Naive thymus-derived CD4-positive, alpha-beta T cell (primary cell): ENCODE measurements at regions of chr12 and their contacts with region 1.

Region 1: GRCh38 chr12:64610149-64610678 is at the start of gene RASSF3:
- DNase-seq: peak; percentile 58 to 85 (median 75)
- ATAC-seq: peak; percentile 76
- H3K4me3 ChIP-seq: peak within 1 kb of the TSS; percentile 93
- H3K4me3 Mint-ChIP-seq: peak within 1 kb of the TSS; percentile 93 to 100 (median 97)
- H3K27ac ChIP-seq: peak within 1 kb of the TSS; percentile 89
- H3K27ac Mint-ChIP-seq: peak within 1 kb of the TSS; percentile 90 to 97 (median 95)
- H3K4me1 ChIP-seq: peaks cover 28 to 29% of the 10 kb centered on the region in 2 donors
- H3K4me1 Mint-ChIP-seq: peaks cover 30 to 50% (median 41%) of the 10 kb centered on the region in 7 donors
- H3K27me3 ChIP-seq: no peaks in the 10 kb centered on the region
- H3K27me3 Mint-ChIP-seq: no peaks in the 10 kb centered on the region
- total RNA-seq, gene RASSF3: 79.0 to 200 (median 107) TPM

Region 2: DNA sequence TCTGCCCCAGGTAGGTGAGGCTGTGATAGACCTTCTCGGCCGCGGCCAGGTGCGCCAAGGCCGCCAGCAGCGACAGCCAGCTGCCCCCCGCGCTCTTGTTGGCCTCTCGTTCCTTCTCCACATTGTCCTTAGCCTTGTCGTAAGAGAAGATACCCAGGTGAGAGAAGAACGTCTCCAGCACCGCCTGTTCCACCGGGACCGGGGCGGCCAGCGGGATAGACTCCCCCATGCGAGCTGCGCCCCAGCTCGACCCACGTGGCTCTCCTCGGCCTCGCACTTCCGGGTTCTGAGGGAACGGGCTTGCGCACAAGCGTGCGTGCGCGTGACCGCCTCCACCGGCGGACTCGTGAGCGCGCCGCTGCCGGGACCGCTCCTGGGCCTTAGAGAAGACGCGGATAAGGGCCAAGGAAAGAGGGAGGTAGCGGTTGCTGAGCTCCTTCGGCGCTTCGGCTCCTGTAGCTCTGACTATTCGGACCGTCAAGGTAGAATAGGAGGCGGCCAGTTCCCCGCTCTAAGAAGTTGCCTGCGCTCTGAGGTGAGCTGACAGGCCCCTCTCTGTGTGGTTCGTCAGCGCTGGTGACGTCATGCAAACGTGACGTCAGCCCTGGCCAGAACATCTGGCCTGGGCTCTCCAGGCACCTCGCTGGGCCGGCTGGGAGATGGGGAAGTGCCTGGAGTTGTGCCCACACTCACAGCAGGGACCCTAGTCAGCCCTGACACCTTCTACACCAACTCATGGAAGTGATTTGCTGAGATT is 388.0 kb before region 1 on chr12 and contains the start of gene KICS2:
- CTCF ChIA-PET with region 1: no interaction called
- POLR2A ChIA-PET with region 1: no interaction called
- intact Hi-C with region 1: loop called (anchors 1 to 5 kb)
- DNase-seq: peak; percentile 89 to 95 (median 93)
- ATAC-seq: peak; percentile 96
- H3K4me3 ChIP-seq: peak within 1 kb of the TSS; percentile 87
- H3K4me3 Mint-ChIP-seq: peak within 1 kb of the TSS; percentile 86 to 100 (median 98)
- H3K27ac ChIP-seq: peak within 1 kb of the TSS; percentile 92
- H3K27ac Mint-ChIP-seq: peak within 1 kb of the TSS; percentile 94 to 100 (median 98)
- H3K4me1 ChIP-seq: peaks cover 8 to 19% of the 10 kb centered on the region in 2 donors
- H3K4me1 Mint-ChIP-seq: peaks cover 17 to 51% (median 41%) of the 10 kb centered on the region in 7 donors
- H3K27me3 ChIP-seq: no peaks in the 10 kb centered on the region
- H3K27me3 Mint-ChIP-seq: peaks cover 0 to 21% (median 8%) of the 10 kb centered on the region in 5 donors
- total RNA-seq, gene KICS2: 11.7 to 26.9 (median 19.5) TPM

Region 3: DNA sequence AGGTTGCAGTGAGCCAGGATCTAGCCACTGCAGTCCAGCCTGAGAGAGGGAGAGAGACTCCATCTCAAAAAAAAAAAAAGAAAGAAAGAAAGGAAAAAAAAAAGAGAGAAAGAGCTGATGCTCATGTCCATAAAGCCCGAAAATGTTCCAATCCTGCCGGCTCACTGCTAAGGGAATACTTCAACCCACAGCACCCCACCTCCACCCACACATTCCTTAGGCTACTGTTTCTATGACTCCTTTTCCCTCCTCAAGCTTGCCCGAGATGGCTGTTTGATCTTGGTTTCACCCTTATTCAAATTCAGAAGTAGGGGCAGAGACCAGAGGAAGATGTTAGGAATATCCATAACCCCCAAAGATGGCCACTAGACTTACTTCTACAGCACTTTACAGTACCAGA is 59.5 kb before region 1 on chr12:
- CTCF ChIA-PET with region 1: interaction called, 9 read pairs
- POLR2A ChIA-PET with region 1: interaction called, 10 read pairs
- intact Hi-C with region 1: loop called (anchors 1 kb)
- DNase-seq: no peak
- ATAC-seq: no peak
- H3K4me3 ChIP-seq: no peak overlapping the region
- H3K4me3 Mint-ChIP-seq: no peak overlapping the region
- H3K27ac ChIP-seq: no peak overlapping the region
- H3K27ac Mint-ChIP-seq: peak overlapping the region in 3 of 9 donors; percentile 7 to 83 (median 18)
- H3K4me1 ChIP-seq: peaks cover 0 to 4% of the 10 kb centered on the region in 2 donors
- H3K4me1 Mint-ChIP-seq: peaks cover 2 to 11% (median 9%) of the 10 kb centered on the region in 7 donors
- H3K27me3 ChIP-seq: no peaks in the 10 kb centered on the region
- H3K27me3 Mint-ChIP-seq: peaks cover 0 to 20% (median 0%) of the 10 kb centered on the region in 5 donors

Region 4: GRCh38 chr12:64583771-64584421 is 26.3 kb before region 1 on chr12:
- CTCF ChIA-PET with region 1: interaction called, 4 read pairs
- POLR2A ChIA-PET with region 1: interaction called, 23 read pairs
- intact Hi-C with region 1: loop called in 1 of 2 experiments (anchors 1 kb)
- DNase-seq: peak in 4 of 9 donors; percentile 16 to 37 (median 26)
- ATAC-seq: peak; percentile 48
- H3K4me3 ChIP-seq: peak overlapping the region; percentile 25
- H3K4me3 Mint-ChIP-seq: peak overlapping the region; percentile 29 to 90 (median 78)
- H3K27ac ChIP-seq: peak overlapping the region; percentile 21
- H3K27ac Mint-ChIP-seq: peak overlapping the region; percentile 42 to 94 (median 82)
- H3K4me1 ChIP-seq: peaks cover 6 to 25% of the 10 kb centered on the region in 2 donors
- H3K4me1 Mint-ChIP-seq: peaks cover 18 to 43% (median 32%) of the 10 kb centered on the region in 7 donors
- H3K27me3 ChIP-seq: no peaks in the 10 kb centered on the region
- H3K27me3 Mint-ChIP-seq: peaks cover 0 to 4% (median 0%) of the 10 kb centered on the region in 5 donors

Region 5: DNA sequence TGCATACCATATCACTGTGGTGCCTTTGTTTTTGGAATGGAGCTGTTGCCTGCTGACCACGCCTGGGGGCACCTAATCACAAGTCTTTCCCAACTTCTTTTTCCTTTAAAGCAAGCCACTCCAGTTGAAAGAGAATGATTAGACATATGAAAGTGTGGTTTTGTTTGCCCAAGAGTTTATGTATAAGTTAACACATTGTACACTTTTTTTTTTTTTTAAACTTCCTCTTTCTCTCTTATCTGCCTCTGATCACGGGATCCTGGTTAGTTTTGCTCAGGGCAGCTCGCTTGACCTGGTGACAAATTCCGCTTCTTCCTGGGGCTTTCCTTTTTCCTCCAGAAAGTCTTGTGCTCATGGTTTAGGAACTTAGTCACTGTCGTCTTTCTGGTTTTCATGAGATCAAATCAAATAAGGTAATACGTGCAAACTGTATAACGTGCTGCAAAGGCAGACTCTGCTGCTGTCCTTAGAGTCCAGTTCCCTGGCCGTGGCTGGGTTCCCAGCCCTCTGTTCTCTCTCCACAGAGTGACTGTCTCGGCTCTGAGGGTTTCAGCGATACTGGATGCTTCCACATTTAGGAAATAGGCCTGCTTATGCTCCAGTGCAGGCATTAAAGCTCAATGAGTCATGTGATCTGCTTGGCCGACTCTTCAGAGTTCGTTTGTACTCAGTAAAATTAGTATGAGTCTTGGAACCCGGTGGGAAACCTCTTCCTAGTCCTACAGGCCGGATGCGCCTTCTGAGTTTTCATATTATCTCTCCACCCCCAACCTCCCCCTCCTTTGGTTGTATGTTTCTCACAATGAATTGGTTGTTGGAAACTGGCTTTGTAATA is 15.2 kb after region 1 on chr12:
- CTCF ChIA-PET with region 1: no interaction called
- POLR2A ChIA-PET with region 1: interaction called, 5 read pairs
- intact Hi-C with region 1: loop called in 1 of 2 experiments (anchors 1 kb)
- DNase-seq: peak in 1 of 9 donors; percentile 40
- ATAC-seq: peak; percentile 73
- H3K4me3 ChIP-seq: peak overlapping the region; percentile 14
- H3K4me3 Mint-ChIP-seq: peak overlapping the region; percentile 78 to 93 (median 88)
- H3K27ac ChIP-seq: peak overlapping the region; percentile 66
- H3K27ac Mint-ChIP-seq: peak overlapping the region; percentile 79 to 91 (median 88)
- H3K4me1 ChIP-seq: peaks cover 45 to 54% of the 10 kb centered on the region in 2 donors
- H3K4me1 Mint-ChIP-seq: peaks cover 34 to 91% (median 77%) of the 10 kb centered on the region in 7 donors
- H3K27me3 ChIP-seq: no peaks in the 10 kb centered on the region
- H3K27me3 Mint-ChIP-seq: no peaks in the 10 kb centered on the region

Region 6: DNA sequence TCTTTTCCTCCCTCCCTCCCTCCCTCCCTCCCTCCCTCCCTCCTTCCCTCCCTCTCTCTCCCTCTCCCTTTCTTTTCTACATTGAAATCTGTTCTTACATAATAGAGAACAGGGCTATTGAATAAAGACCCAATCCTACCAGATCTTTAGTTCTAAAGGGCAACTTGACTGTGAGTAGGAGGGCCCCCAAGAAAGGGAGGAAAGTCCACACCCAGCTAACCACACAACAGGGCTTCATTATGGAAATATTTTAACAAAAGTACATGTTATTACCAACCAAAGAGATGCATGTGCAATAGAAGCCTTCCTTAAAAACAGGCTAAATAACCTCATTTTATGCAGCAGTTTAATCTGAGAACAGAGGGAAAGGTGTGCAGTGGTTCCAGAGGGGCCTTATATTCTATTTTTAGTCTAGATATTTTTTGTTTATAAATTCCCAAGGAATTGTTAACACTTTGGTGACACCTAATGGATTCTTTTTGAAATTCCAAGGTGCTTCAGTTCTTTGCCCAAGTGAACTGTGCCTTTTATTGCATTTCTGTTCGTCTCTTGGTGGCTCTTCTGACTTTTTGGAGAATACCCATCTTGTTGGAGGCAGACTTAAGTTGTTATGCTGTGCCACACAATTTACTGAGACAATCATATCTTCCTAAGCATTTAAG is 86.0 kb after region 1 on chr12:
- CTCF ChIA-PET with region 1: interaction called, 8 read pairs
- POLR2A ChIA-PET with region 1: interaction called, 900 read pairs
- intact Hi-C with region 1: loop called (anchors 1 kb)
- DNase-seq: no peak
- ATAC-seq: no peak
- H3K4me3 ChIP-seq: no peak overlapping the region
- H3K4me3 Mint-ChIP-seq: peak overlapping the region in 8 of 10 donors; percentile 30 to 74 (median 50)
- H3K27ac ChIP-seq: peak overlapping the region; percentile 51
- H3K27ac Mint-ChIP-seq: peak overlapping the region in 8 of 9 donors; percentile 84 to 97 (median 92)
- H3K4me1 ChIP-seq: peaks cover 14 to 79% of the 10 kb centered on the region in 2 donors
- H3K4me1 Mint-ChIP-seq: peaks cover 58 to 86% (median 81%) of the 10 kb centered on the region in 7 donors
- H3K27me3 ChIP-seq: no peaks in the 10 kb centered on the region
- H3K27me3 Mint-ChIP-seq: no peaks in the 10 kb centered on the region

Region 7: DNA sequence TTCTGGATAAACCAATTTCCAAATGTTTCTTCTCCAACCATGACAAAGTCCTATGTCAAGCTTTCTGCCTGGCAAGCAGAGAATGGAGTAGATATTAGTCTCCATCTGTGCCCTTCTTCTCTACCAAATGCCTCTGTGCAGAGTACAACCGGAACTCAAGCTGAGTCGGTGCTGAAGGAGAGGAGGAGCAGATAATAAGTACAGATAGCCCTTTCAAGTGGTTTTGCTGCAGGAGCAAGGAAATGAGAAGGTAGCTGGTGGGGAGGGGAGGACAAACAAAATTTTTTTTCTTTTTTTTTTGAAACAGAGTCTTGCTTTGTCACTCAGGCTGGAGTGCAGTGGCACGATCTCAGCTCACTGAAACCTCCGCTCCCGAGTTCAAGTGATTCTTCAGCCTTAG is 1677.9 kb after region 1 on chr12:
- CTCF ChIA-PET with region 1: no interaction called
- POLR2A ChIA-PET with region 1: no interaction called
- intact Hi-C with region 1: loop called in 1 of 2 experiments (anchors 1 kb)
- DNase-seq: peak in 8 of 9 donors; percentile 48 to 93 (median 89)
- ATAC-seq: peak; percentile 96
- H3K4me3 ChIP-seq: peak overlapping the region; percentile 47
- H3K4me3 Mint-ChIP-seq: peak overlapping the region; percentile 57 to 82 (median 68)
- H3K27ac ChIP-seq: peak overlapping the region; percentile 4
- H3K27ac Mint-ChIP-seq: peak overlapping the region; percentile 70 to 96 (median 85)
- H3K4me1 ChIP-seq: peaks cover 57 to 80% of the 10 kb centered on the region in 2 donors
- H3K4me1 Mint-ChIP-seq: peaks cover 61 to 100% (median 84%) of the 10 kb centered on the region in 7 donors
- H3K27me3 ChIP-seq: no peaks in the 10 kb centered on the region
- H3K27me3 Mint-ChIP-seq: no peaks in the 10 kb centered on the region